ENCODE measurements at regions of chr10 and their contacts with region 1.

Region 1: GRCh38 chr10:64408391-64409183 is 887.4 kb downstream of the REEP3 start:
- DNase-seq: no peak
- ATAC-seq: no peak
- H3K4me3 ChIP-seq: no peak overlapping the region
- H3K27ac ChIP-seq: no peak overlapping the region
- H3K4me1 ChIP-seq: no peaks in the 10 kb centered on the region
- H3K27me3 ChIP-seq: no peaks in the 10 kb centered on the region
- CTCF ChIP-seq: no peak

Region 2: DNA sequence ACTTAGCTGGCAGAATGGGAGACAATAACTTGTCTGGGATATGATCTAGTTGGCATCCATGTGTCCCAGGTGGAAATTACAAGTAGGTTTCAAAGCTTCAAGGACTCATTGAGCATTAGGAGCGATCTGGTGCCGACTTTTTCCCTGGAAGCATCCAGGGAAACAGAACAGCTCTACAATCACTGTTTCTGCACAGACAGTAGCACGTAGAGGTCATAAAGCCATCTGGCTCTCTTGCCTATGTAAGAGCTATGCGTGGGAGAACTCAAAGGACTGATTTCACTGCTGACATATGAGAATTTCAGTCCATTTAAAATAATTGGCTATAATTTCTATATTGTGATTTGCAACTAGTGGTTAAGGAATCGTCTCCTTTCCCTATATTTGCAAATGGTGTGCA is 95.7 kb before region 1 on chr10:
- CTCF ChIA-PET with region 1: no interaction called
- POLR2A ChIA-PET with region 1: interaction called, 17 read pairs
- intact Hi-C with region 1: no loop called
- DNase-seq: no peak
- ATAC-seq: no peak
- H3K4me3 ChIP-seq: no peak overlapping the region
- H3K27ac ChIP-seq: no peak overlapping the region
- H3K4me1 ChIP-seq: no peaks in the 10 kb centered on the region
- H3K27me3 ChIP-seq: no peaks in the 10 kb centered on the region
- CTCF ChIP-seq: no peak

Measured in PC-3 (cell line).